Naive thymus-derived CD4-positive, alpha-beta T cell (primary cell): ENCODE measurements at regions of chr6 and their contacts with region 1.

Region 1: GRCh38 chr6:35297601-35298481 is at the start of gene DEF6:
- DNase-seq: peak; percentile 64 to 89 (median 84)
- ATAC-seq: peak; percentile 91
- H3K4me3 ChIP-seq: peak within 1 kb of the TSS; percentile 95
- H3K4me3 Mint-ChIP-seq: peak within 1 kb of the TSS; percentile 84 to 100 (median 90)
- H3K27ac ChIP-seq: peak within 1 kb of the TSS; percentile 91
- H3K27ac Mint-ChIP-seq: peak within 1 kb of the TSS; percentile 83 to 100 (median 98)
- H3K4me1 ChIP-seq: peaks cover 33 to 46% of the 10 kb centered on the region in 2 donors
- H3K4me1 Mint-ChIP-seq: peaks cover 27 to 53% (median 45%) of the 10 kb centered on the region in 7 donors
- H3K27me3 ChIP-seq: no peaks in the 10 kb centered on the region
- H3K27me3 Mint-ChIP-seq: no peaks in the 10 kb centered on the region
- total RNA-seq, gene DEF6: 219 to 250 (median 225) TPM

Region 2: DNA sequence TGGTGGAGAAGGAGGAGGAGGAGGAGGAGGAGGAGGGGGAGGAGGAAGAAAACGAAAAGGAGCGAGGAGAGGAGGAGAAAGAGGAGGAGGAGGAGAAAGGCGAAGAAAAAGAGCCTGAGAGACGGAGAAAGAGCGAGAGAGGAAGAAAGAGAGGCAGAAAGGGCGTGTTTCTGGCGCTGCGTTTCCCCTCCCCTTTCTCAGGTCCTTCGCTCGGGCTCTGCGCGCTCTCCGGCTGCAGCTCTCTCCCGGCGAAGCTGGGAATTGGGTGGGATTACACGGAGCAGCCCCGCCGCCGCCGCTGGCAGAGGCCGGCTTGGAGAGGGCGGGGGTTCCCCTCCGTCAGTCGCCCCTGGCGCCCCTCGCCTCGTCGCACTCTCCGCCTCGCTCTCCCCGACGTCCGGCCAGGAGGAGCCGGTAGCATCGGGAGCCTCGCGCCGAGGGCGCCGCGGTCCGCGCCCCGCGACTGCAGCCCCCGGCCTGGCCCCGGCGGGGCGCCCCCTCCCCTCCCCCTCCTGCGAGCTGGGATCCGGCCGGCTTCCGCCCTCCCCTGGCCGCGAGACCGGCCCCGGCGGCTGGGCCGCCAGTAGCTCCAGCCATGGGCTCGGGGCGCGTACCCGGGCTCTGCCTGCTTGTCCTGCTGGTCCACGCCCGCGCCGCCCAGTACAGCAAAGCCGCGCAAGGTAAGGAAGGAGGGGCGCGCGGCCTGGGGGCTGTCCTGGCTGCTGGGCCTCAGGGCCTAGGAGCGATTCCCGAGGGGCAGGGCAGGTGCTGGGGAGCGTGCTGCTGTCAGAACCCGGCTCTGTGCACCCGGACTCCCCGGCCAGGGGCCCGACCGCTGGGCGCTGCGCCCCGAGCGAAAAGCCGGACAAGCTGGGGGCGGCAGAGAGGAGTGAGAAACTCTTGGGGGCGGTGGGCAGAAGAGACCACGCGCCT is 83.8 kb before region 1 on chr6 and contains the start of gene SCUBE3:
- CTCF ChIA-PET with region 1: no interaction called
- POLR2A ChIA-PET with region 1: no interaction called
- intact Hi-C with region 1: no loop called
- DNase-seq: peak in 6 of 9 donors; percentile 5 to 36 (median 12)
- ATAC-seq: peak; percentile 24
- H3K4me3 ChIP-seq: peak within 1 kb of the TSS; percentile 44
- H3K4me3 Mint-ChIP-seq: peak within 1 kb of the TSS; percentile 58 to 84 (median 70)
- H3K27ac ChIP-seq: no peak within 1 kb of the TSS
- H3K27ac Mint-ChIP-seq: no peak within 1 kb of the TSS
- H3K4me1 ChIP-seq: no peaks in the 10 kb centered on the region
- H3K4me1 Mint-ChIP-seq: peaks cover 6 to 10% (median 7%) of the 10 kb centered on the region in 7 donors
- H3K27me3 ChIP-seq: peaks cover 4 to 17% of the 10 kb centered on the region in 2 donors
- H3K27me3 Mint-ChIP-seq: peaks cover 64 to 87% (median 70%) of the 10 kb centered on the region in 5 donors
- total RNA-seq, gene SCUBE3: not detected

Region 3: DNA sequence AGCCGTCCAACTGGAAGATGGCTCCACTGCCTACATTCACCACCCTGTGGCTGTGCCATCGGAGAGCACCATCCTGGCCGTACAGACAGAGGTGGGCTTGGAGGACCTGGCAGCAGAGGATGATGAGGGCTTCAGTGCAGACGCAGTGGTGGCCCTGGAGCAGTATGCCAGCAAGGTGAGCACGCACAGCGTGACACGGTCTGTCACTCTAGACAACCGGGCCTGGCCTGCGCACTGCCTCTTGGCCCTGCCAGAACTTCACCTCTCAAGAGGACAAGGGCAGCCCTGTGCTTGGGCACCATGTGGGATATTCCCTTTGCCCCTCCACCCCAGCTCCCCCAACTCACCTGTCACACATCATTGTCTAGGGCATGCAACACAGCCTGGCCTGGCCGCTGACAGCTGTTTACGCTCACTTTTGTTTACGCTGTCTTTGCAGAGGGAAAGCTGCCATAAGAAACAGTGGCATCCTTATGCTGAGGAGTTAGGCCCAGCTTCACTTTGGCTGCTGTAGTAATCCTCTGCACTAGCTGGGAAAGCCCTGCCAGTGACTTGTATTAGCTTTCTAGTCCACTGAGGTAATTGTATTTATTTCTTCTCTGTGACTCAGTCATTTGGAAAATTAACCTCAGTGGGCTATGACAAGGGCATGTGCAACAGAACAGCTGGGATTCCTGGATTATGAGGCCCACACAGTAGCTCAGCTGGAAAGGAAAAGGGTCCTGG is 10.0 kb before region 1 on chr6:
- CTCF ChIA-PET with region 1: interaction called, 15 read pairs
- POLR2A ChIA-PET with region 1: no interaction called
- intact Hi-C with region 1: no loop called
- DNase-seq: no peak
- ATAC-seq: no peak
- H3K4me3 ChIP-seq: no peak overlapping the region
- H3K4me3 Mint-ChIP-seq: no peak overlapping the region
- H3K27ac ChIP-seq: no peak overlapping the region
- H3K27ac Mint-ChIP-seq: no peak overlapping the region
- H3K4me1 ChIP-seq: no peaks in the 10 kb centered on the region
- H3K4me1 Mint-ChIP-seq: no peaks in the 10 kb centered on the region
- H3K27me3 ChIP-seq: no peaks in the 10 kb centered on the region
- H3K27me3 Mint-ChIP-seq: no peaks in the 10 kb centered on the region

Region 4: DNA sequence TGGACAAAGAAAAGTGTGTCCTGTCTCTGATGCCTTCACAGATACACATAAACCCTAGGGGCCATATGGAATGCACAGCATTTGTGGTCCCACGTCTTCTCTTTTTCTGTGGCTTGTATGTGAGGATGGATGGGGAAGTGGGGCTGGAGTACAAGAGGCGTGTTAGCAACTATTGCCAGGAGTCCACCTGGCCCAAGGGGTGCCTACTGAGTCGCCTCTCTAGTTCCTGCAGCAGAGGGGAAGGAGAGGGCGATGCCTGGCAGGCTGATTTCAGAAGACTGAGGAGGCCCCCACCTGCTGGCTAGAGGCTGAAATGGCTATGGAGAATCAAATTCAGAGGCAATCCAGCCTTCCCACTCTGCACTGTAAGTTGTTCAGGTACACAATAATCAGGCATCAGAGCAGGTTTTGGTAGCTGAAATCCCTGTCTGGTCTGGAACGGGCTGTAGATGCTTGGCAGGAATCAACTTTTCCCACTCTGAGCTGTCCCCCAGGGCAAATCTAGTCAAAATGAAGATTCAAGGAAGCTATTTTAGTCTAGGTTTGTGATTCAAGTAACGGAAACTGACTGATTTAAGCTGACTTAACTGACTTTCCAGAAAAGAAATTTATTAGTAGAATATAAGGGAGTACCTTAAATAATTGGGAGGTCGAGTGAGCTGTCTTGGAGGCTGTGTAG is 29.6 kb after region 1 on chr6:
- CTCF ChIA-PET with region 1: interaction called, 346 read pairs
- POLR2A ChIA-PET with region 1: interaction called, 318 read pairs
- intact Hi-C with region 1: loop called (anchors 1 kb)
- DNase-seq: peak in 8 of 9 donors; percentile 64 to 81 (median 76)
- ATAC-seq: peak; percentile 86
- H3K4me3 ChIP-seq: no peak overlapping the region
- H3K4me3 Mint-ChIP-seq: peak overlapping the region in 9 of 10 donors; percentile 1 to 70 (median 36)
- H3K27ac ChIP-seq: peak overlapping the region; percentile 34
- H3K27ac Mint-ChIP-seq: peak overlapping the region; percentile 65 to 96 (median 86)
- H3K4me1 ChIP-seq: peaks cover 11 to 16% of the 10 kb centered on the region in 2 donors
- H3K4me1 Mint-ChIP-seq: peaks cover 15 to 29% (median 23%) of the 10 kb centered on the region in 7 donors
- H3K27me3 ChIP-seq: no peaks in the 10 kb centered on the region
- H3K27me3 Mint-ChIP-seq: no peaks in the 10 kb centered on the region

Region 5: DNA sequence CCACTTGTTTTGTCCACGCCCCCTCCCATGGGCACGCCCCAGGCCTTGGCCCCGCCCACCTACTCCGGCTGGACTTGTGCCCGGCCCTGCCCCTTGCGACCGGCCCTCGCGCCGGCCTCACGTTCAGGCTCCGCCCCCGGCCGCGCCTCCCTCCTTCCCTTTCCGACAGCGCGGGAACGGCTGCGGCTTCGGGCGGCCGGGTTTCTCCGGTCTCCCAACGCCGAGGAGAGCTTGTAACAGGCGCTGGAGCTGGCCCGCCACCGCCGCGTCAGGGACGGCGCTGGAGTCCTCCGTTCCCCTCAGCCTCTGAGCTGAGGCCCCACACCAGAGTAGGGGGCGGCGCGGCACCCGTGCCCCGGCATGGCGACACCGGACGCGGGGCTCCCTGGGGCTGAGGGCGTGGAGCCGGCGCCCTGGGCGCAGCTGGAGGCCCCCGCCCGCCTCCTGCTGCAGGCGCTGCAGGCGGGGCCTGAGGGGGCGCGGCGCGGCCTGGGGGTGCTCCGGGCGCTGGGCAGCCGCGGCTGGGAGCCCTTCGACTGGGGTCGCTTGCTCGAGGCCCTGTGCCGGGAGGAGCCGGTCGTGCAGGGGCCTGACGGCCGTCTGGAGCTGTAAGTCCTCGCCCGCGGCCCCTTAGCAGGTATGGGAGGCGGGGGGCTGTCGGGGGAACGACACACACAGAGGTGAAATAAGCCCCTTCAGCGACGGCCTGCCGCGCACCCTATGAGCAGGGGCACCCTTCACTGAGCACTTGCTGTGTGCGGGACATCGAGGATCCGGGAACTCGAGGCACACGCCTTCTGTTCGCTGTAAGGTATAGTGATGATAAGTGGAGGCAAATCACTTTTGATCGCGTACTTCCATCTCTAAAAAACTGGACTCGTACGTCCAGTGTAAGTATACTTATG is 154.6 kb after region 1 on chr6 and contains the start of gene FANCE:
- CTCF ChIA-PET with region 1: interaction called, 45 read pairs
- POLR2A ChIA-PET with region 1: interaction called, 13 read pairs
- intact Hi-C with region 1: loop called (anchors 1 kb)
- DNase-seq: peak; percentile 62 to 99 (median 68)
- ATAC-seq: peak; percentile 94
- H3K4me3 ChIP-seq: peak within 1 kb of the TSS; percentile 63
- H3K4me3 Mint-ChIP-seq: peak within 1 kb of the TSS; percentile 74 to 91 (median 86)
- H3K27ac ChIP-seq: peak within 1 kb of the TSS; percentile 70
- H3K27ac Mint-ChIP-seq: peak within 1 kb of the TSS; percentile 53 to 92 (median 79)
- H3K4me1 ChIP-seq: peaks cover 8 to 11% of the 10 kb centered on the region in 2 donors
- H3K4me1 Mint-ChIP-seq: peaks cover 9 to 49% (median 42%) of the 10 kb centered on the region in 7 donors
- H3K27me3 ChIP-seq: no peaks in the 10 kb centered on the region
- H3K27me3 Mint-ChIP-seq: peaks cover 0 to 14% (median 0%) of the 10 kb centered on the region in 5 donors
- total RNA-seq, gene FANCE: 3.1 to 12.0 (median 6.4) TPM

Region 6: GRCh38 chr6:35552285-35552917 is 254.6 kb after region 1 on chr6:
- CTCF ChIA-PET with region 1: interaction called, 6 read pairs
- POLR2A ChIA-PET with region 1: no interaction called
- intact Hi-C with region 1: loop called (anchors 1 kb)
- DNase-seq: peak; percentile 36 to 69 (median 60)
- ATAC-seq: peak; percentile 84
- H3K4me3 ChIP-seq: no peak overlapping the region
- H3K4me3 Mint-ChIP-seq: no peak overlapping the region
- H3K27ac ChIP-seq: no peak overlapping the region
- H3K27ac Mint-ChIP-seq: peak overlapping the region in 1 of 9 donors; percentile 67
- H3K4me1 ChIP-seq: no peaks in the 10 kb centered on the region
- H3K4me1 Mint-ChIP-seq: peaks cover 0 to 8% (median 6%) of the 10 kb centered on the region in 7 donors
- H3K27me3 ChIP-seq: no peaks in the 10 kb centered on the region
- H3K27me3 Mint-ChIP-seq: peaks cover 0 to 17% (median 0%) of the 10 kb centered on the region in 5 donors

Region 7: GRCh38 chr6:35737413-35738211 is 439.8 kb after region 1 on chr6:
- CTCF ChIA-PET with region 1: interaction called, 4 read pairs
- POLR2A ChIA-PET with region 1: no interaction called
- intact Hi-C with region 1: loop called (anchors 1 kb)
- DNase-seq: peak in 7 of 9 donors; percentile 60 to 80 (median 73)
- ATAC-seq: peak; percentile 83
- H3K4me3 ChIP-seq: no peak overlapping the region
- H3K4me3 Mint-ChIP-seq: peak overlapping the region in 8 of 10 donors; percentile 51 to 75 (median 62)
- H3K27ac ChIP-seq: peak overlapping the region; percentile 22
- H3K27ac Mint-ChIP-seq: peak overlapping the region; percentile 28 to 98 (median 90)
- H3K4me1 ChIP-seq: peaks cover 31 to 51% of the 10 kb centered on the region in 2 donors
- H3K4me1 Mint-ChIP-seq: peaks cover 21 to 50% (median 42%) of the 10 kb centered on the region in 7 donors
- H3K27me3 ChIP-seq: no peaks in the 10 kb centered on the region
- H3K27me3 Mint-ChIP-seq: no peaks in the 10 kb centered on the region